Activated CD4-positive, alpha-beta T cell treated with anti-CD3 and anti-CD28 coated beads for 36 hours (primary cell): ENCODE measurements at regions of chr2 and their contacts with region 1.

Region 1: GRCh38 chr2:38554973-38555595 is 47.6 kb downstream of the HNRNPLL start:
- DNase-seq: no peak
- ATAC-seq: no peak
- H3K4me3 Mint-ChIP-seq: no peak overlapping the region
- H3K27ac Mint-ChIP-seq: no peak overlapping the region
- H3K4me1 Mint-ChIP-seq: peaks cover 13% of the 10 kb centered on the region
- H3K27me3 Mint-ChIP-seq: no peaks in the 10 kb centered on the region

Region 2: DNA sequence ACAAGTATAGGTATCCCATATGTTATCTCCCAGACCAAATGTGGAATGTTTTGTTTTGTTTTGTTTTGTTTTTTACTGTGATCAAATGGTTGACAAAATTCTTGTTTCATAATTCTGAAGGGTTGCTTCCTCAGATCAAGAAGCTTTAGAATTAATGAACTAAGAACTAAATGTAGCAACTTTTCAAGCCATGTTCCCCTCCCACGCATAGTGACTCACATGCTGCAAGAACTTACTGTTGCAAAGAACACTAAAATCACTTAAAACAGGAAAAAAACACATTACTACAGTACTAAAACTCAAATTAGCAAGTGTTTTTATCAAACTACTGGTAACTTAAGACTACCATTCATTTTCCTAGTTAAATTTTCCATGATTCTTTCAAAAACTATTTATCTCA is 17.1 kb after region 1 on chr2:
- CTCF ChIA-PET with region 1: interaction called, 23 read pairs
- POLR2A ChIA-PET with region 1: interaction called, 3 read pairs
- intact Hi-C with region 1: no loop called
- DNase-seq: peak; percentile 75
- ATAC-seq: peak; percentile 77
- H3K4me3 Mint-ChIP-seq: no peak overlapping the region
- H3K27ac Mint-ChIP-seq: peak overlapping the region; percentile 75
- H3K4me1 Mint-ChIP-seq: peaks cover 41% of the 10 kb centered on the region
- H3K27me3 Mint-ChIP-seq: no peaks in the 10 kb centered on the region